SK-N-SH (cell line): ENCODE measurements at regions of chr20 and their contacts with region 1.

Region 1: DNA sequence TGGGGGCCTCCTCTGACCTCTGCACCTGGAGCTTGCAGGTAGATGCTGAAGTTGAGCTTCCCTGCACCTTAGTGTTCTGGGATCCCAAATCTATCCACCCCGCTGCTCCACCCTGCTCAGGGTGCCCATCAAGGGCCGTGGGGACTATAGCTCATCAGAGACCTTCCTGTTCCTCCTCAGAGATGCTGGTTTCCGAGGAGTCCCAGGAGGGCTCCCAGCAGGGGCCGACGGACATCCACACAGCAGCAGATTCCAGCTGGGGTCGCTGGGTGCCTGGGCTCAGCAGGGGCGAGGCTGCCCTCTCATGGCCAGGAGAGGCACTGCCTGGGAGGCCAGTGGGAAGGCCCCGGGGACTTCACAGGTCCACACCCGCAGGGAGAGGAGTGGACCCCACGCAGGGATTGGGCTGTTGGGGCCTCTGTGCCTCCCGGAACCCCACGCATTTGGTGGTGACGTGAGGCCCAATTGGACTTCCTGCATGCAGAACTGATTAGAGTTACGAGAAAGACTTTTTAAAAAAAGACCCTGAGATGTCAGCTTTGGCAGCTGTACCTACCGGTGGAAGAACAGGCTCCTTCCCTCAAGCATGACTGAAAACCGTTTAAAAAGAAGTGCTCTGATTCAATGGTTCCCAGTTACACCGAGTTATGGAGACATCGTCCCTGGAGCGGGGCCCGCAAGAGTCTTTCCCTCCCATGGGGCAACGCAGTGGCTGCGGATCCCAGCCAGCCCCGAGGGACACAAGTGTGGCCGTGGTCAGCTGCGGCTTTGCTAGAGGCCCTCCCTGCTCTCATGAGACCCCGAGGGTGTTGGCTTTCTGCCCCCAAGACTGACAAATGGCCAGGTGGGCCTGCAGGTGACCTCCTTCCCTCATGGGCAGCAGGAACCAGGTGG is 25.3 kb upstream of the SLCO4A1 start:
- DNase-seq: peak; percentile 95
- H3K4me3 ChIP-seq: no peak overlapping the region; a peak in 1 of 4 replicates
- H3K27ac ChIP-seq: no peak overlapping the region
- H3K4me1 ChIP-seq: peaks cover 0 to 3% of the 10 kb centered on the region in 2 experiments; a peak in 1 of 4 replicates
- H3K27me3 ChIP-seq: no peaks in the 10 kb centered on the region
- CTCF ChIP-seq: peak; percentile 90
- EP300 ChIP-seq: peak in 1 of 2 experiments; percentile 18; a peak in 1 of 4 replicates
- RAD21 ChIP-seq: peak; percentile 96

Region 2: DNA sequence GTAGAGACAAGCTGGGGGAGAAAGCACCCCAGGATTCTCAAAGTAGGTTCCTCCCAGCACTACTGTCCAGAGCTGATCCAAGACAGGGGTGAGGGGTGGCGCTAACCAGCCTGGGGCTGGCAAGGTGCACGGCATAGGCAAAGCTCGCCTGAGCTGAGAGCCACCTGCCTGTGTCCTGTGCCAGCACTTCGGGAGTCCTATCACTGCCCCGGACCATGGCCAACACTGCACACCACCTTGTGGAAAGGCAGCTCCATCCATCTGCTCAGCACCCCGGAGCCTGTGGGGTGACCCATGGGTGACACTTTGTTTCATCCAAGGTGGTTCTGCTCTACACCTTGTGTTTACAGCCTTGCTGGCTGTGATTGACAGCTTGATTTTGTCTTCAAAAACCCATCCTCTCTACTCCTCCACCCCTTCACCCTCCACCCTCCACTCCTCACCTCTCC is 108.3 kb before region 1 on chr20:
- CTCF ChIA-PET with region 1: interaction called, 51 read pairs
- POLR2A ChIA-PET with region 1: no interaction called
- DNase-seq: no peak
- H3K4me3 ChIP-seq: no peak overlapping the region
- H3K27ac ChIP-seq: no peak overlapping the region
- H3K4me1 ChIP-seq: peaks cover 0 to 5% of the 10 kb centered on the region in 2 experiments; a peak in 1 of 4 replicates
- H3K27me3 ChIP-seq: no peaks in the 10 kb centered on the region; the same call in 1 of the 2 replicates
- CTCF ChIP-seq: no peak
- EP300 ChIP-seq: no peak
- RAD21 ChIP-seq: no peak

Region 3: GRCh38 chr20:62550087-62550632 is 66.8 kb before region 1 on chr20:
- CTCF ChIA-PET with region 1: interaction called, 15 read pairs
- POLR2A ChIA-PET with region 1: no interaction called
- DNase-seq: no peak
- H3K4me3 ChIP-seq: no peak overlapping the region
- H3K27ac ChIP-seq: no peak overlapping the region
- H3K4me1 ChIP-seq: peaks cover 0 to 25% of the 10 kb centered on the region in 2 experiments; a peak in 1 of 4 replicates
- H3K27me3 ChIP-seq: peaks cover 27% of the 10 kb centered on the region
- CTCF ChIP-seq: no peak
- EP300 ChIP-seq: no peak
- RAD21 ChIP-seq: no peak

Region 4: GRCh38 chr20:62593616-62594015 is 23.4 kb before region 1 on chr20:
- CTCF ChIA-PET with region 1: interaction called, 53 read pairs
- POLR2A ChIA-PET with region 1: no interaction called
- DNase-seq: no peak
- H3K4me3 ChIP-seq: no peak overlapping the region
- H3K27ac ChIP-seq: no peak overlapping the region
- H3K4me1 ChIP-seq: no peaks in the 10 kb centered on the region
- H3K27me3 ChIP-seq: no peaks in the 10 kb centered on the region
- CTCF ChIP-seq: no peak
- EP300 ChIP-seq: no peak
- RAD21 ChIP-seq: no peak

Region 5: DNA sequence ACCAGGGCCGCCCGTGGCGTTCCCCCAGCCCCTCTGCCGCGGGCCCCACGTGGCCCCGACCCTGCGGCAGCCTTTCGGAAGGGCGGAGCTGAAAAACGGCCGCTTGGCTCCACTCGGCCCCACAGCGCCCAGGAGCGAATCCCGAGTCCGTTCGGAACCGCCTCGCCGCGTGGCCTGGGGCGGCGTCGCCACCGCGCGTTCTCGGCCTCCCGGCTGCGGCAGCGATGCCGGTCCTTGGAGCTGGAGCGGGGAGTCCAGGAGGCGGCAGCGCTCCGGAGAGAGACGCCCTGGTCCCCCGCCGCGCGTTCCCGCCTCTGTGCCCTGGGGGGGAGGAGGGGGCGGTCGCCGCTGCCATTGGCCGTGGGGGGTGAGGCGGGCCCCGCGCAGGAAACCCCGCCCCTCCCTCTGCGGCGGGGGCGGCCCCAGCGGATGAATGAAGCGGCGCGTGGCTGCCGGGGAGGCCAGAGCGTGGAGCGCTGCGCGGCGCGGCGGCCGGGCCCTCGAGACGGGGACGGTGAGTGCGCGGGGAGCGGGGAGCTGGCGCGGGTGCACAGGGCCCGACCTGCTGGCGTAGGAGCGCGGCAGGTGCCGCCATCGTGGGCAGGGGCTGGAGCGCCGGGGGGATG is 25.2 kb after region 1 on chr20 and contains the start of gene SLCO4A1:
- CTCF ChIA-PET with region 1: interaction called, 19 read pairs
- POLR2A ChIA-PET with region 1: no interaction called
- DNase-seq: peak; percentile 98
- H3K4me3 ChIP-seq: peak within 1 kb of the TSS; percentile 35 to 56; a peak in 3 of 4 replicates
- H3K27ac ChIP-seq: peak within 1 kb of the TSS in 1 of 2 experiments; percentile 74; a peak in 1 of 4 replicates
- H3K4me1 ChIP-seq: peaks cover 0 to 64% of the 10 kb centered on the region in 2 experiments; a peak in 2 of 4 replicates
- H3K27me3 ChIP-seq: peaks cover 37% of the 10 kb centered on the region
- CTCF ChIP-seq: no peak
- EP300 ChIP-seq: no peak
- RAD21 ChIP-seq: no peak
- polyA plus RNA-seq, gene SLCO4A1: 0.33 and 0.36 TPM in 2 replicates

Region 6: GRCh38 chr20:62776692-62777527 is 159.9 kb after region 1 on chr20:
- CTCF ChIA-PET with region 1: no interaction called
- POLR2A ChIA-PET with region 1: no interaction called
- DNase-seq: peak; percentile 78
- H3K4me3 ChIP-seq: no peak overlapping the region
- H3K27ac ChIP-seq: no peak overlapping the region
- H3K4me1 ChIP-seq: peaks cover 0 to 4% of the 10 kb centered on the region in 2 experiments; a peak in 1 of 4 replicates
- H3K27me3 ChIP-seq: no peaks in the 10 kb centered on the region
- CTCF ChIP-seq: no peak
- EP300 ChIP-seq: no peak
- RAD21 ChIP-seq: no peak

Region 7: GRCh38 chr20:63216041-63216848 is 599.3 kb after region 1 on chr20 and contains the start of gene YTHDF1:
- CTCF ChIA-PET with region 1: no interaction called
- POLR2A ChIA-PET with region 1: no interaction called
- DNase-seq: peak; percentile 100
- H3K4me3 ChIP-seq: peak within 1 kb of the TSS; percentile 58 to 82
- H3K27ac ChIP-seq: peak within 1 kb of the TSS; percentile 42 to 87; a peak in 3 of 4 replicates
- H3K4me1 ChIP-seq: peaks cover 10 to 21% of the 10 kb centered on the region in 2 experiments; a peak in 3 of 4 replicates
- H3K27me3 ChIP-seq: no peaks in the 10 kb centered on the region
- CTCF ChIP-seq: no peak
- EP300 ChIP-seq: 0 out of 4 replicates have a peak, but pooled peaks of 1 of the 2 experiments have one; percentile 18
- RAD21 ChIP-seq: no peak
- polyA plus RNA-seq, gene YTHDF1: 15.5 and 17.0 TPM in 2 replicates